ENCODE measurements at regions of chr19 and their contacts with region 1.

Region 1: GRCh38 chr19:50794439-50795237 is 4.4 kb downstream of the ACP4 start:
- DNase-seq: peak in 1 of 2 experiments; percentile 79
- H3K4me3 ChIP-seq: no peak overlapping the region
- H3K27ac ChIP-seq: peak overlapping the region; percentile 56
- H3K4me1 ChIP-seq: peaks cover 0 to 14% (median 6%) of the 10 kb centered on the region in 4 experiments; a peak in 5 of 7 replicates
- H3K27me3 ChIP-seq: no peaks in the 10 kb centered on the region; a peak in 1 of 7 replicates
- CTCF ChIP-seq: peak; percentile 47 to 72 (median 55)
- EP300 ChIP-seq: no peak
- POLR2A ChIP-seq: peak; percentile 64 to 80
- RAD21 ChIP-seq: no peak; a peak in 1 of 4 replicates

Region 2: GRCh38 chr19:50705422-50706019 is 89.1 kb before region 1 on chr19:
- CTCF ChIA-PET with region 1: interaction called, 7 read pairs
- POLR2A ChIA-PET with region 1: interaction called, 34 read pairs
- DNase-seq: peak in 1 of 2 experiments; percentile 67
- H3K4me3 ChIP-seq: no peak overlapping the region
- H3K27ac ChIP-seq: no peak overlapping the region
- H3K4me1 ChIP-seq: peaks cover 0 to 3% (median under 1%) of the 10 kb centered on the region in 4 experiments; a peak in 5 of 7 replicates
- H3K27me3 ChIP-seq: peaks cover 0 to 10% (median 5%) of the 10 kb centered on the region in 4 experiments; a peak in 4 of 7 replicates
- CTCF ChIP-seq: peak; percentile 73 to 85 (median 80)
- EP300 ChIP-seq: no peak
- POLR2A ChIP-seq: no peak
- RAD21 ChIP-seq: peak; percentile 83 to 88

Region 3: GRCh38 chr19:50777754-50778303 is 16.8 kb before region 1 on chr19:
- CTCF ChIA-PET with region 1: interaction called, 15 read pairs
- POLR2A ChIA-PET with region 1: interaction called, 110 read pairs
- DNase-seq: no peak
- H3K4me3 ChIP-seq: peak overlapping the region in 1 of 4 experiments; percentile 47; a peak in 3 of 8 replicates
- H3K27ac ChIP-seq: no peak overlapping the region
- H3K4me1 ChIP-seq: peaks cover 2 to 7% (median 4%) of the 10 kb centered on the region in 4 experiments; a peak in 5 of 7 replicates
- H3K27me3 ChIP-seq: peaks cover 3 to 53% (median 35%) of the 10 kb centered on the region in 4 experiments
- CTCF ChIP-seq: no peak
- EP300 ChIP-seq: no peak
- POLR2A ChIP-seq: no peak
- RAD21 ChIP-seq: no peak

Region 4: DNA sequence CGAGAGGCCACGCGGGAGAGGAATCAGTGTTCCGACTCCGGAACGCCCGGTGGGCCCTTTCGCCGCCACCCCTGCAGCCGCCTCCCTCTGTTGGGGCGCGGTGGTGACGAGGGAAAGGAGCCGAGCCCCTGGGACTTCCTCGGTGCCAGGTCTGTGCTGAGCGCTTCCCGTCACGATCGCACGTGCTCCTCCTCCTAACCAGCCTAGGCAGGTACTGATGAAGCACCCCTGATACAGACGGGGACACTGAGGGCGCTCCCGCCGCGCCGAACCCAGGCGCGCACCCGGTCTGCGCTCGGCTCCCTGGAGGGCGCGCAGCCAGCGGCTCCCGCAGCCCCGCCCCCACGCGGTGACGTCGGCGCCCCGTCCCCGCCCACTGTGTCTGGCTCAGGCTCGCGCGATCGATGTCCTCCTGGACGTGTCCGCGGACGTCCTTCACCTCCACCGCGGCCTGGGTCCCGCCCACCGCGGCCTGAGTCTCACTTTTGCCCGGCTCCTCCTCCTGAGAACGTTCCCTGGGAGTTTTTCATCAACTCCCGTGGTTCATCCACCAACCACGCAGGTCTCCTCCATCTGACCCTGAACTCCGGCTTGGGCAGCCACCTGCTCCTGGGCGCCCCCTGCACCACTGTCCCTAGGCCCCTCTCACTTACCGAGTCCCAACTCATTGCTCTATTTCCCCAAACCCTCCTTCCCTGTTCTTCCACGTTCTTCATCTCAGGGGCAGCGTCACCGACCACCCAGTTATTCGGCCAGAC is 41.3 kb after region 1 on chr19:
- CTCF ChIA-PET with region 1: no interaction called
- POLR2A ChIA-PET with region 1: interaction called, 24 read pairs
- DNase-seq: peak in 1 of 2 experiments; percentile 95
- H3K4me3 ChIP-seq: peak overlapping the region; percentile 59 to 76 (median 64)
- H3K27ac ChIP-seq: no peak overlapping the region
- H3K4me1 ChIP-seq: peaks cover 0 to 7% (median 2%) of the 10 kb centered on the region in 4 experiments; a peak in 3 of 7 replicates
- H3K27me3 ChIP-seq: peaks cover 0 to 22% (median 7%) of the 10 kb centered on the region in 4 experiments; a peak in 6 of 7 replicates
- CTCF ChIP-seq: peak in 2 of 3 experiments; percentile 3 to 26; a peak in 2 of 4 replicates
- EP300 ChIP-seq: no peak
- POLR2A ChIP-seq: peak in 1 of 2 experiments; percentile 71; a peak in 2 of 3 replicates
- RAD21 ChIP-seq: no peak

Region 5: GRCh38 chr19:50870417-50871089 is 75.9 kb after region 1 on chr19:
- CTCF ChIA-PET with region 1: interaction called, 12 read pairs
- POLR2A ChIA-PET with region 1: interaction called, 16 read pairs
- DNase-seq: peak in 1 of 2 experiments; percentile 52
- H3K4me3 ChIP-seq: no peak overlapping the region
- H3K27ac ChIP-seq: no peak overlapping the region
- H3K4me1 ChIP-seq: no peaks in the 10 kb centered on the region
- H3K27me3 ChIP-seq: peaks cover 0 to 3% (median 1%) of the 10 kb centered on the region in 4 experiments; a peak in 2 of 7 replicates
- CTCF ChIP-seq: peak; percentile 47 to 67 (median 60)
- EP300 ChIP-seq: no peak
- POLR2A ChIP-seq: no peak
- RAD21 ChIP-seq: peak; percentile 43 to 65

Region 6: GRCh38 chr19:50909240-50910070 is 114.8 kb after region 1 on chr19:
- CTCF ChIA-PET with region 1: no interaction called
- POLR2A ChIA-PET with region 1: interaction called, 26 read pairs
- DNase-seq: peak; percentile 95 to 100
- H3K4me3 ChIP-seq: peak overlapping the region; percentile 38 to 68 (median 54)
- H3K27ac ChIP-seq: no peak overlapping the region
- H3K4me1 ChIP-seq: peaks cover 0 to 14% (median 9%) of the 10 kb centered on the region in 4 experiments; a peak in 5 of 7 replicates
- H3K27me3 ChIP-seq: peaks cover 20 to 40% (median 32%) of the 10 kb centered on the region in 4 experiments
- CTCF ChIP-seq: no peak
- EP300 ChIP-seq: no peak
- POLR2A ChIP-seq: no peak
- RAD21 ChIP-seq: no peak

Measured in H1 (cell line).